Activated naive CD4-positive, alpha-beta T cell treated with anti-CD3 and anti-CD28 coated beads for 36 hours (primary cell): ENCODE measurements at regions of chr6 and their contacts with region 1.

Region 1: GRCh38 chr6:51855310-51856082 is 231.9 kb downstream of the PKHD1 start:
- DNase-seq: peak; percentile 27
- H3K4me3 Mint-ChIP-seq: no peak overlapping the region
- H3K27ac Mint-ChIP-seq: no peak overlapping the region
- H3K4me1 Mint-ChIP-seq: no peaks in the 10 kb centered on the region
- H3K27me3 Mint-ChIP-seq: peaks cover 4% of the 10 kb centered on the region

Region 2: DNA sequence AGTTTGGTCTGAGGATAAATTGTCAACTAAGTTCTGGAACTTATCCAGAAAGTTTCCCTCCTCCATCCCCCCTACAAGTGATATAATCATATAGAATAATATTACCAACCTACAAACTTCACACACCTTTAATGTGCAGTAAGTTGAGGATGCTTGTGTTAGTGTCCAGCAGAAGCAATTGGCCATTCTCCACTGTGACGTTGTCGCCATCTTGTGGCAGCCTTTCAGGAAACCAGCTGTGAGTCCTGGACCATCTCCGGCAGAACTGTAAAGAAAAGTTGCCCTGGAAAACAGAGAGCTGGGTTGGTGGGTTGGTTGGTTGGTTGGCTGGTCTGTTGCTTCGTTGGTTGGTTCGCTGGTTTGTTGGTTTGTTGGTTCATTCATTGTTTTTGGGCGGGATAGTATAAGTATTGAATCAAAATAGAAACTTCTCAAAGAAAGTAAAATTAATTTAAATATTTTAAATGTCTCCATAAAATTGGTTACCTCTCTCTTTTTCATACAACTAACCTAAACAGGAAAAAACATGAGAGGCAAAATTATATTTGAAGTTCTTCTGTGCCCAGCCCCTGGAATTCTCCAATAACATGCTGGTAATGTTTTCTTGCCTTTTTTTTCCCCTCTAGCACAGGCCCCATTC is 104.4 kb after region 1 on chr6:
- CTCF ChIA-PET with region 1: interaction called, 4 read pairs
- intact Hi-C with region 1: loop called (anchors 1 kb)
- DNase-seq: peak; percentile 75
- H3K4me3 Mint-ChIP-seq: no peak overlapping the region
- H3K27ac Mint-ChIP-seq: no peak overlapping the region
- H3K4me1 Mint-ChIP-seq: no peaks in the 10 kb centered on the region
- H3K27me3 Mint-ChIP-seq: peaks cover 15% of the 10 kb centered on the region

Region 3: GRCh38 chr6:52049252-52050050 is 194.0 kb after region 1 on chr6:
- CTCF ChIA-PET with region 1: interaction called, 4 read pairs
- intact Hi-C with region 1: loop called (anchors 1 kb)
- DNase-seq: peak; percentile 25
- H3K4me3 Mint-ChIP-seq: no peak overlapping the region
- H3K27ac Mint-ChIP-seq: no peak overlapping the region
- H3K4me1 Mint-ChIP-seq: no peaks in the 10 kb centered on the region
- H3K27me3 Mint-ChIP-seq: peaks cover 4% of the 10 kb centered on the region

Region 4: GRCh38 chr6:52233975-52234823 is 378.7 kb after region 1 on chr6:
- CTCF ChIA-PET with region 1: no interaction called
- intact Hi-C with region 1: loop called (anchors 10 kb)
- DNase-seq: peak; percentile 62
- H3K4me3 Mint-ChIP-seq: no peak overlapping the region
- H3K27ac Mint-ChIP-seq: no peak overlapping the region
- H3K4me1 Mint-ChIP-seq: peaks cover 6% of the 10 kb centered on the region
- H3K27me3 Mint-ChIP-seq: peaks cover 23% of the 10 kb centered on the region